Heart left ventricle (tissue), 16 donors: ENCODE measurements at regions of chr17 and their contacts with region 1.

Region 1: GRCh38 chr17:77054936-77055335 is 85.8 kb upstream of the SEC14L1 start:
- DNase-seq: peak in 1 of 5 donors; percentile 22
- ATAC-seq: no peak
- H3K4me3 ChIP-seq: no peak overlapping the region
- H3K27ac ChIP-seq: no peak overlapping the region
- H3K4me1 ChIP-seq: no peaks in the 10 kb centered on the region
- H3K27me3 ChIP-seq: peaks cover 4 to 89% (median 29%) of the 10 kb centered on the region in 9 donors
- CTCF ChIP-seq: no peak
- POLR2A ChIP-seq: no peak

Region 2: DNA sequence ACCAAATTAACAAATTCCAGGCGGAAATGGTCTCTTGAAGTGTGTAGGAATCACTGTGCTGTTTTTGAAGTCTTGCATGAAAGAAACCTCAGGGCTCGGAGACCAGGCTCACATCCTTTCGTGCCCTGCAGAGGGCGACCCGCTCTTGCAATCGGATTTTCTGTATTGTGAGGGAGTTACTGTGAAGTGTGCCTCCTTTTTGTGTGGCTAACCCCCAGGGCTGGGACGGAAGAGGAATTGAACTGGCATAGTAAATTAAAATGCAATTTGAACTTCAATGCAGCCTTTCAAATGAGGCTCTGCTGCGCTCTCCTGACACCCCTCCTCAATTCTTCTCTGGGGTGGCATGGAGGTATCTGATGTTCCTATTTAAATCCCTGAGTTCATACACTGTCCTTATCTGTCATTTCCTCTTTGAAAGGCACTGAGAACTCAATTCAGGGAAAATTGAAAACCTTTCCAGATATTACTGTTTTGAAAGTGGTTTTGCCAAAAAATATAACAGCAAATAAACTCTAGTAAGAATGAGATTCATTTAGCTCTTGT is 238.3 kb before region 1 on chr17:
- intact Hi-C with region 1: loop called in 1 of 10 experiments (anchors 5 kb)
- DNase-seq: no peak
- ATAC-seq: peak in 2 of 4 donors; percentile 48 to 62
- H3K4me3 ChIP-seq: no peak overlapping the region
- H3K27ac ChIP-seq: no peak overlapping the region
- H3K4me1 ChIP-seq: peaks cover 0 to 5% (median 0%) of the 10 kb centered on the region in 12 donors
- H3K27me3 ChIP-seq: peaks cover 0 to 10% (median 0%) of the 10 kb centered on the region in 9 donors
- CTCF ChIP-seq: peak; percentile 18 to 60 (median 44)
- POLR2A ChIP-seq: no peak

Region 3: GRCh38 chr17:77011173-77012011 is 43.5 kb before region 1 on chr17:
- intact Hi-C with region 1: loop called in 2 of 10 experiments (anchors 2 to 5 kb)
- DNase-seq: no peak
- ATAC-seq: no peak
- H3K4me3 ChIP-seq: no peak overlapping the region
- H3K27ac ChIP-seq: no peak overlapping the region
- H3K4me1 ChIP-seq: no peaks in the 10 kb centered on the region
- H3K27me3 ChIP-seq: peaks cover 0 to 25% (median 0%) of the 10 kb centered on the region in 9 donors
- CTCF ChIP-seq: peak; percentile 15 to 58 (median 39)
- POLR2A ChIP-seq: no peak

Region 4: DNA sequence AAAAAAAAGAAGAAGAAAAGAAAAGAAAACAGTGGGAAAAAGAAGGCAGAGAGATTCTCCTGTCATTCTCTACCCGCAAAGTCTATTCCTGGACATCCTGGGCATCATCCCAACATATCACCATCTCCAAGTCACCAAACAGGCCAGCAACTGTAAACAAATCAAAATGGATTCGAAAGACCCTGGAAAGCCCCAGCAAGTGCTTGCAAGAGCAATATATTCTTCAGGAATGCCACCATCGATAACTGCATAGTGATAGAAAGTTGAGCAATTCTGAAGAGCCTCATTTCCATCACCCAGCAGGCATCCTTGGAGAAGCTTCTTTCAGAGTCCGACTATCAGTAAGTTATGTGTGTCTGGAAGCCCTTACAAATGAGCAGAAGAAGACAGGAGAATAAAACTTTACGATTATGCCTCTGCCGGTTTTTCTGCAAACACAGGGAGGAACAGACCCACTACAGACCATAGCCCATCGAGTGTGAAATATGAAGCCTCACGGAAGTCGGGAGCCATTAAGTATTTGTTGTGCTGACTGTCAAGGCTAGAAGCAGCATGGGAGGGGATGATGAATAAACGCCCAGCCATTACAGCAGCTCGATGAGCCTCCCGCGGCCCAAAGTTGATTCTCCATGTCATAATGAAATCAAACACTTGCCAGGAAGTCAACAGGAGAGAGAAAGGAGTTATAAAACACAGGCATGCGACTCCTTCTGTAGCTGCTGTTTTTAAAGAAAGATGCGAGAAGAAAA is 21.4 kb after region 1 on chr17:
- intact Hi-C with region 1: no loop called
- DNase-seq: no peak
- ATAC-seq: peak in 2 of 4 donors; percentile 48 to 55
- H3K4me3 ChIP-seq: no peak overlapping the region
- H3K27ac ChIP-seq: no peak overlapping the region
- H3K4me1 ChIP-seq: peaks cover 0 to 5% (median 0%) of the 10 kb centered on the region in 12 donors
- H3K27me3 ChIP-seq: peaks cover 0 to 55% (median 6%) of the 10 kb centered on the region in 9 donors
- CTCF ChIP-seq: no peak
- POLR2A ChIP-seq: no peak